Right lobe of liver (tissue), 6 donors: ENCODE measurements at regions of chr1 and their contacts with region 1.

Region 1: DNA sequence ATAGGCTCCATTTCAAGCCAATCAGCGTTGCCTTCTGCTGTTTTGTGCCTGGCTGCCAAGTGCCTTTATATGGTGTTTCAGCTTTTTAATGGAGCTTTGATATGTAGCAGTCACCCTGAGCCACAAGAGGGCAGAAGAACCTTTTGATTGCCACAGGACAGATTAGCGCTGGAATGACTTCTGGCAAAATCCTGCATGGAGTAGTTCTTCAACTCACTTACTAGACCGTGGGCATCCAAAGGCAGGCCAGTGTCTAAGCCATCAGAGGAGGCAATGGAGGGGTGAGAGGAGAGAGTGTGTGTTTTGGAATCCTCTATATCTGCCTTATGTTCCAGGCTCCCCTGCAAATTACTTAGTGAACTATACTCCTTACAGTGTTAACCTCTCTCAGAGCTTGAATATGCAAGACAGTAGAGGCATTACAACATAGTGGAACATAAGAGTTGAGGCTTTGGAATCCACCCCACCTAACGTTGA is 56.2 kb downstream of the ST3GAL3 start:
- DNase-seq: peak in 1 of 3 donors; percentile 71
- ATAC-seq: peak; percentile 96 to 97 (median 96)
- H3K4me3 ChIP-seq: no peak overlapping the region
- H3K27ac ChIP-seq: no peak overlapping the region
- H3K4me1 ChIP-seq: peaks cover 0 to 9% (median 0%) of the 10 kb centered on the region in 4 donors
- H3K27me3 ChIP-seq: no peaks in the 10 kb centered on the region
- CTCF ChIP-seq: peak; percentile 78 to 93 (median 86)
- POLR2A ChIP-seq: no peak

Region 2: GRCh38 chr1:43934101-43934985 is 170.8 kb after region 1 on chr1:
- intact Hi-C with region 1: loop called (anchors 5 to 10 kb)
- DNase-seq: peak; percentile 71 to 76 (median 73)
- ATAC-seq: peak; percentile 70 to 81 (median 75)
- H3K4me3 ChIP-seq: peak overlapping the region in 2 of 3 donors; percentile 27 to 29
- H3K27ac ChIP-seq: no peak overlapping the region
- H3K4me1 ChIP-seq: peaks cover 0 to 19% (median 3%) of the 10 kb centered on the region in 4 donors
- H3K27me3 ChIP-seq: no peaks in the 10 kb centered on the region
- CTCF ChIP-seq: peak; percentile 62 to 74 (median 63)
- POLR2A ChIP-seq: no peak

Region 3: GRCh38 chr1:44044071-44044801 is 280.7 kb after region 1 on chr1:
- intact Hi-C with region 1: loop called in 1 of 2 experiments (anchors 5 kb)
- DNase-seq: peak in 1 of 3 donors; percentile 15
- ATAC-seq: no peak
- H3K4me3 ChIP-seq: no peak overlapping the region
- H3K27ac ChIP-seq: no peak overlapping the region
- H3K4me1 ChIP-seq: no peaks in the 10 kb centered on the region
- H3K27me3 ChIP-seq: no peaks in the 10 kb centered on the region
- CTCF ChIP-seq: no peak
- POLR2A ChIP-seq: no peak